Posterior vena cava (tissue), 2 donors: ENCODE measurements at regions of chr1 and their contacts with region 1.

Region 1: DNA sequence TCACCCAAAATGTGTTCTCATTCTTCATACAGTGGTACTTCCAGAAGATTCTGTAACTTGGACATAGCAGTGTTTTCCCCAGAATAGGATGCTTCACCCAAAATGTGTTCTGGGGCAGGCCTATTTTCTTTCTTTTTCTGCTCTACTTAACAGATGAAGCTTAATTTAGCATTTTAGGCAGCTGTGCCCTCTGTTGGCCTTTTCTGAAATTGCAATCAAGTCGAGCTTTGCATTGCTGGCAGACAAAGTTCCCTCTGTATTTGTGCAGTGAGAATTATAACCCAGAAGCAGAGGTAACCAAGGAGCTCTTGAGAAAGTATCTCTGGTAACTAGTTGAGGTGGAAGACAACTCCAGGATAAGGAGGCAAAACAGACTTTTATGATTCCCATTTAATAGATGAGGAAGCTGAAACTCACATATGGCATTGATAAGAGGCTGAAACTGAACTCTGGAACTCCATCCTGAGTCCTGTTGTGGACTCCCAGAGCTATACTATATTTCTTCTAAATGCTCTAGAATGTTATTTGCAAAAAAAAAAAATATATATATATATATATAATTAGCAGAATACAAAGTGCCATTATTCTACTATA is 50.3 kb upstream of the L1TD1 start:
- DNase-seq: no peak

Region 2: GRCh38 chr1:61539720-61540462 is 604.4 kb before region 1 on chr1:
- intact Hi-C with region 1: loop called in 1 of 2 experiments (anchors 5 kb)
- DNase-seq: no peak

Region 3: GRCh38 chr1:61746813-61747212 is 397.5 kb before region 1 on chr1:
- intact Hi-C with region 1: no loop called
- DNase-seq: no peak

Region 4: DNA sequence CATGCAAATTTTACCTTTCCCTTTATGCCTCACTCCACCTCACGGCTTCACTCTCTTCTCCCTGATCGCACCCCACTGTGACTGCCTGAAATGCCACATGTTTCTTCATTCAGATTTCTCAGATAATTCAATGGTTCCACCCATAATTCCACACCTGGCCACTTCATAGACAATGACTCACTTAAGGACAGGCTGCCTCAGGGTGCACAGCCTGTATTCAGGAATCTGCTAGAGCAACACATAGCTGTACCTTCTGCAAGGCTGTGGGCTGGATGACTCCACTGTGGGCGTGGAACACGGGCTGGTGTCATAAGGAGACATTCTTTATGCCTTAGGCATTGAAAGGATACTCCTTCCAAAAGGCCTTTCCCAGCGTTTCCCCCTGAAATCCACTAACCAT is 86.4 kb after region 1 on chr1:
- intact Hi-C with region 1: no loop called
- DNase-seq: no peak